Aorta (tissue), 5 donors: ENCODE measurements at regions of chr16 and their contacts with region 1.

Region 1: GRCh38 chr16:81939156-81940056 is 71.9 kb downstream of the SDR42E1 start:
- DNase-seq: no peak
- ATAC-seq: no peak
- H3K4me3 ChIP-seq: no peak overlapping the region
- H3K27ac ChIP-seq: no peak overlapping the region
- H3K4me1 ChIP-seq: no peaks in the 10 kb centered on the region
- H3K27me3 ChIP-seq: no peaks in the 10 kb centered on the region

Region 2: GRCh38 chr16:82061861-82062525 is 122.6 kb after region 1 on chr16:
- intact Hi-C with region 1: loop called in 1 of 2 experiments (anchors 10 kb)
- DNase-seq: no peak
- ATAC-seq: no peak
- H3K4me3 ChIP-seq: no peak overlapping the region
- H3K27ac ChIP-seq: no peak overlapping the region
- H3K4me1 ChIP-seq: no peaks in the 10 kb centered on the region
- H3K27me3 ChIP-seq: no peaks in the 10 kb centered on the region